Activated CD4-positive, alpha-beta T cell treated with anti-CD3 and anti-CD28 coated beads, Interleukin-2, amount 10 ng/mL, durations not matched to agents 24 days and 14 days (primary cell): ENCODE measurements at regions of chr2 and their contacts with region 1.

Region 1: GRCh38 chr2:54041135-54041534 is 70.3 kb upstream of the PSME4 start:
- DNase-seq: peak; percentile 61
- H3K4me3 Mint-ChIP-seq: no peak overlapping the region
- H3K27ac Mint-ChIP-seq: no peak overlapping the region
- H3K4me1 Mint-ChIP-seq: peaks cover 8% of the 10 kb centered on the region
- H3K27me3 Mint-ChIP-seq: no peaks in the 10 kb centered on the region

Region 2: DNA sequence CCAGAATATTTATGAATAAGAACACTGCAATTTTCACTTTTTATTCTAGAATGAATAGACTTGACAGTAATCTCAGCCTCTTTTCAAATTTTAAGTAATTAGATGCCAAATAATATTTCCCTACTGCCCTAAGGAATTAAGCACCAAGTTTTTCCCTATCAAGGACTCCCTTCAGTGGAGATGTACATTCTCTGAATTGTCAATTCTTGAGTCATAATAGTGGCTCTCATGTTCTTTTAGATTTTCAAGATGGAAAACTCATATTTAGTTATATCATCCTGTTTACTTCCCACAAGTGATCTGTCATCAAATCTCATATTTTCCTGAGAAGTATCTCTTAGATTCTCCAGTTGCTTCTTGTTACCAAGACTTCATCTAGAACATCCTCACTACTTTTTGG is 1522.5 kb before region 1 on chr2:
- intact Hi-C with region 1: no loop called
- DNase-seq: no peak
- H3K4me3 Mint-ChIP-seq: no peak overlapping the region
- H3K27ac Mint-ChIP-seq: no peak overlapping the region
- H3K4me1 Mint-ChIP-seq: no peaks in the 10 kb centered on the region
- H3K27me3 Mint-ChIP-seq: no peaks in the 10 kb centered on the region

Region 3: DNA sequence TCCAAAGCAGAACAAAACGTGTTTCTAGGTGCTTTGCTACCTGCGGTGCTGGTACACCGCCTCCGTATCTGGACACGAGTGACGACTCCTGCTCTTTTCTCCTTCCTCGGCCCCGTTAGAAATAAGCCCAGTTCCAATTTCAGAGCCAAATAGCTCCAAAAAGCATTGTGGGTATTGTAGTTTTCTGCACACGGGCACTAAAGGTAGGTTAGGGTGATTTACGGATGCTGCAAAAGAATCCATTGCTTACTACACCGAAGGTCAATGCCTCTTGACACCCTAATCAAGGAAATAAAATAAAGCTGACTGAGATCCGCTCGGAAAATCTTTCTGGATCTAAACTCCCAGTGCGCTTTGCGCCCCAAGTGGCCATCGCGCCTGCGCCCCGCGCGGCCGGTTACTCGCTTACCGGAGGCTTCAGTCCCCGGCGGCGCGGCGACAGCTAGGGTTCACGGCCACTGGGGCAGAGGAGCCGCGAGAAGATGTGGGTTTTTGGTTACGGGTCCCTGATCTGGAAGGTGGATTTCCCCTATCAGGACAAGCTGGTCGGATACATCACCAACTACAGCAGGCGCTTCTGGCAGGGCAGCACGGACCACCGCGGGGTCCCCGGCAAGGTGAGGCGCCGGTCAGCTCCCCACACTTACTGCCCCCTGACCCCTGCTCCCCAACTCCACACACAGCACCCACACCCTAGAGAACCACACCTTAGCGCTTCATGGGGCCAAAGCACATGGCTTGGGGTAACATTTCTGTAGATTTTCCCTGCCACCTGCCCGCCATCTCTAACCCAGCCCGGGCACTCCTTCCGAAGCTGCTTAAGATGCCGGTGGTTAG is 273.5 kb before region 1 on chr2 and contains the start of gene CHAC2:
- intact Hi-C with region 1: loop called (anchors 5 kb)
- DNase-seq: peak; percentile 96
- H3K4me3 Mint-ChIP-seq: peak within 1 kb of the TSS; percentile 92
- H3K27ac Mint-ChIP-seq: peak within 1 kb of the TSS; percentile 98
- H3K4me1 Mint-ChIP-seq: peaks cover 24% of the 10 kb centered on the region
- H3K27me3 Mint-ChIP-seq: no peaks in the 10 kb centered on the region
- total RNA-seq, gene CHAC2: 24.8 and 27.4 TPM in 2 replicates

Region 4: DNA sequence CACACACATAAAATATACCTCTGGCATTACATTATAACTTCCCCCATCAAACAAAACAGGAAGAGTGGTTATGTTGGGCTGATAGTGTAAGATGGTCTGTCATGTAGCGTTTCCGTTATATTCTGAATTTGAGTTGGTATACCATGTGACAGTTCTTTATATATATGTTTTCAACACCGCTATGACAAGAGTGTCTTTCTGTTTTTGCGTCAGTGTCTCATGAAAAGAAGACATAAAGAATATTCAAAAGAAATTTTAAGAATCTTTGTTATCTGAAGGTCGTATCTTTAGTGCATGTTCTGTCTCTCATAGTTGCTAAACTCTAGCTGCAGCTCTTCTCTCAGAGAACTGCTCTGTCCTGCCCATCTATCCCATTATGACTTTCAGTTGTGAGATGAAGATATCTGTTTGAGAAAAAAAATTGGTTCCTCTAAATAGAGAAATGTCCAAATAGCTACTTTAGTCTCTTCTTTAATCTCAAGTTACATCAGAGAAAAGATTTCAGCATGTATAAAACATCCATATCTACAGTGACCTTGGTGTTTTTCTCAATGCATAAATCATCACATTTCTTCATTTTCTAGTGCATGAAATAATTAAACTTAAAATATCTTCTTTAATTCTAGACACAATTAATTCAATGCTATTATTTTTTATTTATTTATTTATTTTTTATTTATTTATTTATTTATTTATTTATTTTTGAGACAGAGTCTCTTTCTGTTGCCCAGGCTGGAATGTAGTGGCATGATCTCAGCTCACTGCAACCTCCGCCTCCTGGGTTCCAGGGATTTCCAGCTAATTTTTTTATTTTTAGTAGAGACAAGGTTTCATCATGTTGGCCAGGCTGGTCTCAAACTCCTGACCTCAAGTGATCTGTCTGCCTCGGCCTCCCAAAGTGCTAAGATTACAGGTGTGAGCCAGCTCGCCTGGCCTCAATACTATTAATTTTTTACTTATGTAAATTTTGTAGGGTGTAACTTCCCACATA is 46.0 kb before region 1 on chr2:
- intact Hi-C with region 1: loop called (anchors 1 kb)
- DNase-seq: peak; percentile 69
- H3K4me3 Mint-ChIP-seq: peak overlapping the region; percentile 58
- H3K27ac Mint-ChIP-seq: peak overlapping the region; percentile 68
- H3K4me1 Mint-ChIP-seq: peaks cover 20% of the 10 kb centered on the region
- H3K27me3 Mint-ChIP-seq: no peaks in the 10 kb centered on the region

Region 5: DNA sequence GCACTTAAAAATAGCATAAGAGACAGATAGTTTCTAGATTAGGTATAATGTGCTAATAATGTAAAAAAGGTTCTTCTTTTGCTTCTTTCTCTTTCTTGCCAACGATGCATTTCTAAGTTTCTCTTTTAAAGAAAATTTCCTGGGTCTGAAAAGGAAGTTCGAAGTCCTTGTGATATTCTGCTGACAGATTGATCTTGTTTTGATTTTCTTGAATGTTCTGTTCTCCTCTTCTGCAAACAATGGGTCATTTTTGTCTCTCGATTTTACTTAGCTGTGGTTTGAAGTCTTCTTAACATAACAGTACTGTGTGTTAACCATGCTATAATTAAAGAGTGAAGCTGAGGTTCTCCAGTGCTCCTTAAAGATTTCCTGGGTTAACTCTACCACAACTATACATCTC is 13.1 kb after region 1 on chr2:
- intact Hi-C with region 1: loop called (anchors 1 kb)
- DNase-seq: no peak
- H3K4me3 Mint-ChIP-seq: peak overlapping the region; percentile 48
- H3K27ac Mint-ChIP-seq: peak overlapping the region; percentile 56
- H3K4me1 Mint-ChIP-seq: peaks cover 16% of the 10 kb centered on the region
- H3K27me3 Mint-ChIP-seq: no peaks in the 10 kb centered on the region

Region 6: GRCh38 chr2:54106631-54107454 is 65.7 kb after region 1 on chr2:
- intact Hi-C with region 1: no loop called
- DNase-seq: peak; percentile 84
- H3K4me3 Mint-ChIP-seq: no peak overlapping the region
- H3K27ac Mint-ChIP-seq: no peak overlapping the region
- H3K4me1 Mint-ChIP-seq: peaks cover 8% of the 10 kb centered on the region
- H3K27me3 Mint-ChIP-seq: peaks cover 11% of the 10 kb centered on the region

Region 7: GRCh38 chr2:54680397-54681041 is 639.4 kb after region 1 on chr2:
- intact Hi-C with region 1: loop called (anchors 1 kb)
- DNase-seq: peak; percentile 80
- H3K4me3 Mint-ChIP-seq: peak overlapping the region; percentile 77
- H3K27ac Mint-ChIP-seq: peak overlapping the region; percentile 63
- H3K4me1 Mint-ChIP-seq: peaks cover 49% of the 10 kb centered on the region
- H3K27me3 Mint-ChIP-seq: peaks cover 47% of the 10 kb centered on the region